Activated CD4-positive, alpha-beta T cell treated with anti-CD3 and anti-CD28 coated beads for 36 hours (primary cell): ENCODE measurements at regions of chr9 and their contacts with region 1.

Region 1: DNA sequence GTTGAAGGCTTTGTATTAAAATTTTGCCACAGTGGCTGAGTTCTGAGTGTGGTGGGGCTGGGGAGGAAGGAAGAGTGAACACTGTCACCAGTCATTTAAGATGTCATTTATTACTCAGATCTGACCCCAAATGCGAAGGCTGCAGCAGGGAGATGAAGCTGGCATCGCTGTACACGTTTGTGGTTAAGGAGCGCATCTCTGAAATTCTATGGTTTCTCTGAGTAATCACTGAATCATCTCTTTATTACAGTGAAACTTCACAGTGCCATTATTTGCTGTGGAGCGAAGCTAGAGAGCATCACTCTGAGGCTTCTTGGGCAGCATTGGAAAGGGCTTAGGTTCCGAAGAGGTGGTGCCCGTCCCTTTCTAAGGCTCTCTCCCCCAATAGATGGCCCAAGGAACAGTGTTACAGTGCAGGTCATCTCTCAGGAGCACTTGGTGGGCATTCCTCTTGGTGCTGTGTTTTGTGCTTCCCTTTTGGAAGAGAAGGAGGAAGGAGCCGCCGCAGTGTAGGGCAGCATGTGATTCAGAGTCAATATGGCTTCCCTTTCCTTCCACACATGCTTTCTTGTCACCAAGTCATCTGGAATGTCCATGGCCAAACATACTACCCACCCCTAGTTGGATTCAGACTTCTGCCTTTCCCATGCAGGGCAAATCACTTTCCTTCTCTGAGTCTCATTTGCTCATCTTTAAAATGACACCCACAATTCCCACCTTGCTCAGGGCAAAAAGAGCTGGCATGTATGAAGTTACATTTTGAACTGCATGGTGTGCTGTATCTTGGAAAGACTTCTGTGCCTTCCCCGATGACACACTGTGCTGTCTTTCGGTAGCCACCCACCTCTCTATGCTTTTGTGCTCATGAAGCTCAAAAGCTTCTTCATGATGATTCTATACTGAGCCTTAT is 9.3 kb upstream of the TEX48 start:
- DNase-seq: peak; percentile 87
- ATAC-seq: peak; percentile 75
- H3K4me3 Mint-ChIP-seq: peak overlapping the region; percentile 48
- H3K27ac Mint-ChIP-seq: peak overlapping the region; percentile 98
- H3K4me1 Mint-ChIP-seq: peaks cover 94% of the 10 kb centered on the region
- H3K27me3 Mint-ChIP-seq: no peaks in the 10 kb centered on the region

Region 2: DNA sequence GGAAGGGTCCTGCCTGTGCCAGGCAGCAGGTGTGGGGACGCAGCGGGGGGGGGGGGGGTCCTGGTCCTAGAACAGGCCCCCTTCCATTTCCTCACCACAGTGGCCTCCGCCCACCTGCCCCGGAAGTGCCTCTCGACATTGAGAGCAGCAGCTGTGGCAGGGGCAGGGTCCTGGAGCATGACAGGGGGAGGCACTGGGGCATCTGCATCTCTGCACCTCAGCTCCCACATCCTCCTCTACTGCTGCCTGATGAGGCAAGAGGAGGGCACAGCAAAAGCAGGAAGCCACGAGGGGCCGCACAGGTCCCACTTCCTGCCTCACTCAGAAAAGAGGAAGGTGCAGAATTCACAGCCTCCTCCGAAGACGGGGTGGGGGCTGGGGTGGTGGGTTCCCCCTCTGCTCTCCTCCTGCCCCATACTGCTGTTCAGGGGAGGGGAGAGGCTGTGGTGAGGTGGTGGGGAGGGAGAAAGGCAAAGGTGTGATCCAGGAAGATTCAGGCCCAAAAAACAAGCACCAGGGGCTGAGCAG is 318.3 kb before region 1 on chr9:
- CTCF ChIA-PET with region 1: no interaction called
- POLR2A ChIA-PET with region 1: no interaction called
- intact Hi-C with region 1: no loop called
- DNase-seq: peak; percentile 91
- ATAC-seq: peak; percentile 85
- H3K4me3 Mint-ChIP-seq: peak overlapping the region; percentile 64
- H3K27ac Mint-ChIP-seq: peak overlapping the region; percentile 89
- H3K4me1 Mint-ChIP-seq: peaks cover 84% of the 10 kb centered on the region
- H3K27me3 Mint-ChIP-seq: no peaks in the 10 kb centered on the region

Region 3: GRCh38 chr9:114701988-114702387 is 10.7 kb after region 1 on chr9:
- CTCF ChIA-PET with region 1: interaction called, 6 read pairs
- POLR2A ChIA-PET with region 1: interaction called, 12 read pairs
- intact Hi-C with region 1: loop called in 1 of 2 experiments (anchors 1 kb)
- DNase-seq: no peak
- ATAC-seq: no peak
- H3K4me3 Mint-ChIP-seq: no peak overlapping the region
- H3K27ac Mint-ChIP-seq: peak overlapping the region; percentile 66
- H3K4me1 Mint-ChIP-seq: peaks cover 59% of the 10 kb centered on the region
- H3K27me3 Mint-ChIP-seq: no peaks in the 10 kb centered on the region

Region 4: GRCh38 chr9:114738581-114739316 is 47.4 kb after region 1 on chr9:
- CTCF ChIA-PET with region 1: interaction called, 9 read pairs
- POLR2A ChIA-PET with region 1: interaction called, 7 read pairs
- intact Hi-C with region 1: loop called (anchors 2 kb)
- DNase-seq: peak; percentile 80
- ATAC-seq: peak; percentile 70
- H3K4me3 Mint-ChIP-seq: no peak overlapping the region
- H3K27ac Mint-ChIP-seq: peak overlapping the region; percentile 84
- H3K4me1 Mint-ChIP-seq: peaks cover 56% of the 10 kb centered on the region
- H3K27me3 Mint-ChIP-seq: no peaks in the 10 kb centered on the region

Region 5: DNA sequence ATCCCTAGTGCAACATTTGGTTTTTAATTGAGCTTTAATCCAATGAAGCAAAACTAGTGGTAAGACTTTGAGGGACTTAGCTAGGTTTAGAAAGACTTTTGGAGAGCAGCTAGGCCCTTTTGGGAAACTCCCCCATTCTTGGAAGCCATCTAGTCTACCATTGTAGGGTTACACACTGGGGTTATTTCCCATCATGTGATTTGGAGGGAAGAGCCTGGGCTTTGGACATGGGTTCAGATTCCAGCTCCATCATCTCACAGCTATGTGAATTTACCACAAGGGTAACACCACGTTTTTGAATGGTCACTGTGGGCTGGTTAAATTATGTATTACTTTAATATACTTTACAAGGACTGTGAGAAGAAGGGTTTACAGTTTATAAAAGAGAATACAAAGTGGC is 132.8 kb after region 1 on chr9:
- CTCF ChIA-PET with region 1: no interaction called
- POLR2A ChIA-PET with region 1: no interaction called
- intact Hi-C with region 1: no loop called
- DNase-seq: no peak
- ATAC-seq: no peak
- H3K4me3 Mint-ChIP-seq: no peak overlapping the region
- H3K27ac Mint-ChIP-seq: no peak overlapping the region
- H3K4me1 Mint-ChIP-seq: peaks cover 28% of the 10 kb centered on the region
- H3K27me3 Mint-ChIP-seq: no peaks in the 10 kb centered on the region

Region 6: GRCh38 chr9:114906908-114907571 is 215.7 kb after region 1 on chr9:
- CTCF ChIA-PET with region 1: interaction called, 6 read pairs
- POLR2A ChIA-PET with region 1: interaction called, 8 read pairs
- intact Hi-C with region 1: loop called in 1 of 2 experiments (anchors 2 kb)
- DNase-seq: peak; percentile 49
- ATAC-seq: peak; percentile 23
- H3K4me3 Mint-ChIP-seq: no peak overlapping the region
- H3K27ac Mint-ChIP-seq: peak overlapping the region; percentile 86
- H3K4me1 Mint-ChIP-seq: peaks cover 58% of the 10 kb centered on the region
- H3K27me3 Mint-ChIP-seq: no peaks in the 10 kb centered on the region

Region 7: DNA sequence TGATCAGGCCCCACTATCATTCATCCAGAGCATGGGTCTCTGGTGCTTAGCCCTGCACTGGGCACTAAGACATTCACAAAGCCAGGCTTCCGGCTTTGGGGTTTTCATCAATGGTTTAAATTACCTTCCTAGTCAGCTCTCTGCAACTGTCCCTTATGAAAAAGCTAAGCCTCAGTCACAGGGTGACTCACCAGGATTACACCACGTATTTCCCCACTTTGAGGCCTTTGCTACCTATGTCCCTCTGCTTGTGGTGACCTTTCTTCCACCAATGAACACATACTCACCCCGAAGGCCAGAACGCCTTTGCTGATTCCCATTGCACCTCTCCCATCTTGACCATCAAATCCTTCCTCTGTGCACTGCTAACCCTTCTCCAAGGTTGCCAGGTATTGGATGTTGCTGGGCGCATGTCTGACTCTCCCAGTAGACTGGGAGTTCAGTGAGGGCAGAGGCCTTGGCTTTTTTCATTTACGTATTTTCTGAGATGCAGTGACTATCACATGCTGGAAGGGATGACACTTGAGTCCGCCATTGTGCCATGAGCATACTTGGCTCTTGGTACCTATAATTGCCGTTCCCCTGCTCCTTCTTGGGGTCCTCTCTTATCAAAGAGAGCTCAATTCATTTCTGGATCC is 297.8 kb after region 1 on chr9:
- CTCF ChIA-PET with region 1: interaction called, 6 read pairs
- POLR2A ChIA-PET with region 1: interaction called, 51 read pairs
- intact Hi-C with region 1: loop called in 1 of 2 experiments (anchors 1 kb)
- DNase-seq: peak; percentile 64
- ATAC-seq: peak; percentile 63
- H3K4me3 Mint-ChIP-seq: peak overlapping the region; percentile 19
- H3K27ac Mint-ChIP-seq: peak overlapping the region; percentile 95
- H3K4me1 Mint-ChIP-seq: peaks cover 68% of the 10 kb centered on the region
- H3K27me3 Mint-ChIP-seq: no peaks in the 10 kb centered on the region

Region 8: DNA sequence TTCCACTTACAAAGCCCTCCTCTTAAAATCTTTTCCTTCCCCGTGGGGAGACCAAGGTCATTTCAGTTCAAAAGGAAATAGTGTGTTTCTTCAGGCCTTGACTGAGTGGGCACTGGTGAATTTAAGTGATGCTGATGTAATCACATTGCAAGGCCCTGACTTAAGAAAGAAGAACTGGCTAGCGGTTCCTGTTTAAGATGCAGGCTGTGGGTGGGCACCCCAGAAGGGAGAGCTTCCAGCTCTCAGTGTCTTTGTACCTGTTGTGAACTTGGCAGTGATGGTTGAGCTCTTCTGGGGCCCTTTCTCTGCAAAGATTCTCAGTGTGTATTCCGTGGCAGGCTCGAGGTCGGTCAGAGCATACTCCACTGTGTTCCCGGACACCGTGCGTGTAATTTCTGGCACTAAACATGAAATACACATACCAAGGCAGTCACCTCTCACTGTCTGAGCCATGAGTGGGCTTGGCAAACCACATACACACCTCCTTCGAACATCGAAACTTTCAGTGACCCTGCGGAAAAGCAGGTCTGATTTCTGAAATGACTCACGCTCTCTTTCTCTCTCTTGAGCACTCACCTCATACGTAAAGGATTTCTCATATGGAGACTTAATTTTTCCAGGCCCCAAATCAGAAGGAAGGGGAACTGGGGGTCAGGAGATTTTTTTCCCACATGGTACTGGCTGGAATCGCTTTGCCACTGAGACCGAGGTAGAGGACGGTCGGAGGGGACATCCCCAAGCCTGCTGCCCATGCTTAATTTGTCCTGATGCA is 344.7 kb after region 1 on chr9:
- CTCF ChIA-PET with region 1: no interaction called
- POLR2A ChIA-PET with region 1: interaction called, 6 read pairs
- intact Hi-C with region 1: loop called in 1 of 2 experiments (anchors 1 kb)
- DNase-seq: peak; percentile 71
- ATAC-seq: peak; percentile 87
- H3K4me3 Mint-ChIP-seq: peak overlapping the region; percentile 1
- H3K27ac Mint-ChIP-seq: peak overlapping the region; percentile 84
- H3K4me1 Mint-ChIP-seq: peaks cover 24% of the 10 kb centered on the region
- H3K27me3 Mint-ChIP-seq: peaks cover 7% of the 10 kb centered on the region

Region 9: GRCh38 chr9:116687074-116687753 is 1995.9 kb after region 1 on chr9 and contains the start of gene TRIM32:
- CTCF ChIA-PET with region 1: no interaction called
- POLR2A ChIA-PET with region 1: no interaction called
- intact Hi-C with region 1: loop called in 1 of 2 experiments (anchors 10 kb)
- DNase-seq: peak; percentile 96
- ATAC-seq: peak; percentile 99
- H3K4me3 Mint-ChIP-seq: peak within 1 kb of the TSS; percentile 81
- H3K27ac Mint-ChIP-seq: peak within 1 kb of the TSS; percentile 81
- H3K4me1 Mint-ChIP-seq: peaks cover 55% of the 10 kb centered on the region
- H3K27me3 Mint-ChIP-seq: no peaks in the 10 kb centered on the region
- total RNA-seq, gene TRIM32: 10.2 to 12.4 TPM